PC-3 (cell line): ENCODE measurements at regions of chr12 and their contacts with region 1.

Region 1: GRCh38 chr12:14577344-14577743 is 9.7 kb upstream of the PLBD1 start:
- DNase-seq: no peak
- ATAC-seq: no peak
- H3K4me3 ChIP-seq: no peak overlapping the region
- H3K27ac ChIP-seq: no peak overlapping the region
- H3K4me1 ChIP-seq: no peaks in the 10 kb centered on the region
- H3K27me3 ChIP-seq: no peaks in the 10 kb centered on the region
- CTCF ChIP-seq: no peak

Region 2: GRCh38 chr12:14327711-14328381 is 249.5 kb before region 1 on chr12:
- CTCF ChIA-PET with region 1: no interaction called
- POLR2A ChIA-PET with region 1: no interaction called
- intact Hi-C with region 1: no loop called
- DNase-seq: no peak
- ATAC-seq: no peak
- H3K4me3 ChIP-seq: no peak overlapping the region
- H3K27ac ChIP-seq: no peak overlapping the region
- H3K4me1 ChIP-seq: no peaks in the 10 kb centered on the region
- H3K27me3 ChIP-seq: no peaks in the 10 kb centered on the region
- CTCF ChIP-seq: no peak

Region 3: GRCh38 chr12:14540801-14541462 is 36.4 kb before region 1 on chr12:
- CTCF ChIA-PET with region 1: no interaction called
- POLR2A ChIA-PET with region 1: interaction called, 11 read pairs
- intact Hi-C with region 1: no loop called
- DNase-seq: peak; percentile 73
- ATAC-seq: peak; percentile 95
- H3K4me3 ChIP-seq: no peak overlapping the region
- H3K27ac ChIP-seq: peak overlapping the region; percentile 53
- H3K4me1 ChIP-seq: peaks cover 19% of the 10 kb centered on the region
- H3K27me3 ChIP-seq: no peaks in the 10 kb centered on the region
- CTCF ChIP-seq: no peak

Region 4: GRCh38 chr12:14618983-14619382 is 41.6 kb after region 1 on chr12:
- CTCF ChIA-PET with region 1: no interaction called
- POLR2A ChIA-PET with region 1: no interaction called
- intact Hi-C with region 1: loop called (anchors 2 kb)
- DNase-seq: peak; percentile 30
- ATAC-seq: peak; percentile 42; the same call in 1 of the 2 replicates
- H3K4me3 ChIP-seq: no peak overlapping the region
- H3K27ac ChIP-seq: no peak overlapping the region
- H3K4me1 ChIP-seq: no peaks in the 10 kb centered on the region
- H3K27me3 ChIP-seq: no peaks in the 10 kb centered on the region
- CTCF ChIP-seq: peak; percentile 62

Region 5: GRCh38 chr12:14635776-14636175 is 58.4 kb after region 1 on chr12:
- CTCF ChIA-PET with region 1: no interaction called
- POLR2A ChIA-PET with region 1: no interaction called
- intact Hi-C with region 1: no loop called
- DNase-seq: no peak
- ATAC-seq: no peak
- H3K4me3 ChIP-seq: no peak overlapping the region
- H3K27ac ChIP-seq: no peak overlapping the region
- H3K4me1 ChIP-seq: no peaks in the 10 kb centered on the region
- H3K27me3 ChIP-seq: no peaks in the 10 kb centered on the region
- CTCF ChIP-seq: no peak

Region 6: DNA sequence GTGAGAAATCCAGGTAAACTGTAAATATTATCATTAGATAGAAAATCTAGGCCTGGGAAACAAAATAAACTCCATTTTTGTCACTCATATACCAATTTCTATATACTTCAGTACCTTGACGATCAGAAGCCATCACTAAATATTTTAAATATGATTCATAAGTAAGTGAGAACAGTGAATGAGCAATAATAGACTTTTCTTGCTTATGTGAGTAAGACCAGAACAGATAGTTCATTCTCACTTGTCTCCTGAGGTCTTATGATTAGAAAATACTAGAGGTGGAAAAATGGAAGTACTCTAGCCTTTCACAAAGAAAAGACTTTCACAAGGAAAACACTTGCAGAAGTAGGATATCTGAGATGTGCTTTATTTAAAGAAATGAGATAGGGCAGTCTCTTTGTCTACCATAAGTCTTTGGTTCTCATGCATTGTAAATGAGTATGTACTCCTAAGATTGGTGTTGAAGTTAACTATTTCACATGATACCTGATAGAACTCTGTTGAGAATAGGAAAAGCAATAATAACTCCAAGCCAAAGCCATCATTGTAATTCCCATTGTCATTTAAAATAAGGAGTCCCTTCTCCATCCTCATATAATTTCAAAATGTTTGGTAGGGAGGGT is 246.8 kb after region 1 on chr12:
- CTCF ChIA-PET with region 1: no interaction called
- POLR2A ChIA-PET with region 1: no interaction called
- intact Hi-C with region 1: no loop called
- DNase-seq: no peak
- ATAC-seq: no peak
- H3K4me3 ChIP-seq: no peak overlapping the region
- H3K27ac ChIP-seq: no peak overlapping the region
- H3K4me1 ChIP-seq: no peaks in the 10 kb centered on the region
- H3K27me3 ChIP-seq: no peaks in the 10 kb centered on the region
- CTCF ChIP-seq: no peak